ENCODE measurements at regions of chr15 and their contacts with region 1.

Region 1: DNA sequence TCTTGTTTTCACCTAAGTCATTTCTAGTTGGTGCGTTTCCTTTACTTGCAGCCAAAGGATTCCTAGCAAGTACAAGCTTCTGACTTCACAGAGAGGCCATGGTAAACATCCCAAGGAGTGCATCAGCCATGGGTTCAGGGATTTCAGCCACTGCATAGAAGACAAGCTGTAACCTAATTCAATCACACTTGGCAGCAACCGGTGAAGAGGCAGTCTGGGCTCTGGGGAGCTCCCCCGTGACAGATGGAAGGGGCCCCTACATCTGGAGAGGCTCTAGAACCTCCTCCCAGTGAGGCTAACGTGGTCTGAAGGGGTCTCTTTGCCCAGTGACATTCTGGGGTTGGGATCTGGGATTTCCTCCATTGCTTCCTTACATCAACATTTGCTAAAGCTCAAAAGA is 8.4 kb upstream of the SNRPA1 start:
- DNase-seq: no peak
- H3K4me3 ChIP-seq: no peak overlapping the region
- H3K27ac ChIP-seq: no peak overlapping the region
- H3K4me1 ChIP-seq: no peaks in the 10 kb centered on the region
- H3K27me3 ChIP-seq: no peaks in the 10 kb centered on the region
- CTCF ChIP-seq: no peak
- POLR2A ChIP-seq: no peak

Region 2: GRCh38 chr15:101501703-101502373 is 198.4 kb after region 1 on chr15:
- intact Hi-C with region 1: loop called (anchors 5 kb)
- DNase-seq: no peak
- H3K4me3 ChIP-seq: no peak overlapping the region
- H3K27ac ChIP-seq: no peak overlapping the region
- H3K4me1 ChIP-seq: no peaks in the 10 kb centered on the region
- H3K27me3 ChIP-seq: no peaks in the 10 kb centered on the region
- CTCF ChIP-seq: peak in 3 of 4 experiments; percentile 24 to 44 (median 35)
- POLR2A ChIP-seq: no peak

Measured in prostate gland (tissue), 2 donors.